ENCODE measurements at regions of chr17 and their contacts with region 1.

Region 1: DNA sequence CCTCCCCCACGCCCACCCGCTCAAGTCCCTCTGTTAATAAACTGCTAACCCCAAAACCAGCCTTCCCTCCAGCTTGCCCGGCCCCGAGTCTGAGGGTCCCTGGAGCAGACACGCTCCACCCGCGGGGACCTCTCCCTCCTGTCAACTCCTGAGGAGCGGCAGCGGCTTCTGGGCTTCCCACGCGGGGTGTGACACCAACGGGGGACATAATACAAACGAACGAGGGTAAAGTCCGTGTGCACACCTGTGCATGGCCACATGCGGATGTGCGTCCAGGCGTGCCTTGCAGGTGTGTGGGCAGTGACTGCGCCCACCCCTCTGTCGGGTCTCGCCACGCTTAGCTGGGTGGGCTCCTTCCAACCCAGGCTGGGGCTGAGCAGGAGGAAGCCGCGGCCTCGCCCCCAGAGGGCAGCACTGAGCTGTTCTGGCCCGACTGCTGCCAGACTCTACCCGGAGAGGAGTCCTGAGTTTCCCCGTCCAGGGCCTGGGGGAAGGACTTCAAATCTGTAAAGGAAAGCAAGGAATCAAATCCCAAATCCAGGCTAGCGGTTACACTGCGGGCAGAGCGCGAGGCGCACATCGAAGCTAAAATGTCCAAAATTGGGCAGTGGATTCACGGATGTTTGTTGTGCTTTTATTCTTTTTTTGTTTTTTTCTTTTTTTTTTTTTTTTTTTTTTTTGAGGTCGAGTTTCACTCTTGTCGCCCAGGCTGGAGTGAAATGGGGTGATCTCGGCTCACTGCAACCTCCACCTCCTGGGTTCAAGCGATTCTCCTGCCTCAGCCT is 24.2 kb upstream of the KRT17 start:
- DNase-seq: peak; percentile 94
- H3K4me3 ChIP-seq: peak overlapping the region; percentile 41 to 58 (median 46)
- H3K27ac ChIP-seq: peak overlapping the region; percentile 47 to 60 (median 54)
- H3K4me1 ChIP-seq: peaks cover 12 to 44% (median 38%) of the 10 kb centered on the region in 4 donors
- H3K27me3 ChIP-seq: peaks cover 0 to 3% (median 0%) of the 10 kb centered on the region in 4 donors
- CTCF ChIP-seq: peak; percentile 93 to 94 (median 93)
- EP300 ChIP-seq: no peak
- POLR2A ChIP-seq: no peak

Region 2: GRCh38 chr17:40803617-40804082 is 845.0 kb before region 1 on chr17:
- intact Hi-C with region 1: loop called (anchors 5 kb)
- DNase-seq: no peak
- H3K4me3 ChIP-seq: no peak overlapping the region
- H3K27ac ChIP-seq: no peak overlapping the region
- H3K4me1 ChIP-seq: no peaks in the 10 kb centered on the region
- H3K27me3 ChIP-seq: peaks cover 0 to 54% (median 0%) of the 10 kb centered on the region in 4 donors
- CTCF ChIP-seq: peak; percentile 84 to 85 (median 84)
- EP300 ChIP-seq: no peak
- POLR2A ChIP-seq: no peak

Region 3: DNA sequence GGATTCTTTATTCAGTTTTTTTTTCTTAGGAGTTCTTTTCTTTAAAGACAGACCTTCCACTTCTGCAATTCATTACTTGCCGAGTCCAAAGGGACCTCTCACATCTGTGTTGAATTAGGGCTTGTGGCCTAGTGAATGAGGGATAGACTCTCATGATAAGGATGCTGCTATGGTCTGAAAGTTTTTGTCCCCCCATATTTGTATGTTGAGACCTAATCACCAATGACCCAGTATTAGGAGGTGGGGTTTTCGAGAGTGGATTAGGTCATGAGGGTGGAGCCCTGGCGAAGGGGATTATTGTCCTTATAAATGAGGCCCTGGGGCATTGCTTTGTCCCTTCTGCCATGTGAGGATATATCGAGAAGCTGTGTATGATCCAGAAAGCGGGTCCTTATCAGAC is 791.1 kb before region 1 on chr17:
- intact Hi-C with region 1: loop called (anchors 5 kb)
- DNase-seq: no peak
- H3K4me3 ChIP-seq: no peak overlapping the region
- H3K27ac ChIP-seq: no peak overlapping the region
- H3K4me1 ChIP-seq: peaks cover 0 to 18% (median 3%) of the 10 kb centered on the region in 4 donors
- H3K27me3 ChIP-seq: peaks cover 0 to under 1% (median 0%) of the 10 kb centered on the region in 4 donors
- CTCF ChIP-seq: no peak
- EP300 ChIP-seq: no peak
- POLR2A ChIP-seq: no peak

Region 4: DNA sequence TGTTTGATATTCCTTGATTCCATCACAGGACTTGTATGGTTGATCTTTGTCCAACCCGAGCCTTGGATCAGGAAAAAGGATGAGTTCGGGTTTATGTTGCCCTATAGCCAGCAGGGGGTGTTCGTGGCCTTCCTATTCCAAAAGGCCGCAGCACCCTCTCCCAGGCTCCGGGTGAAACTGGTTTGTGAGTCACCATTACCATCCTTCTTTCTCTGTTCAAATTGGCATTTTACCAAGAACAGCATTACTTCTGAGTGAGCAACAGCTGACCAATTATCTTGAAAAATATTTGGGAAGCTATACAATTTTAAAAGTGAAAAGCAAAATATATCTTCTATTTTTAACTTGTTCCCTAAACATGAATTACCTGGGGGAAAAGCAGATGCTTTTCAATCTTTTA is 739.3 kb before region 1 on chr17:
- intact Hi-C with region 1: loop called (anchors 2 kb)
- DNase-seq: no peak
- H3K4me3 ChIP-seq: no peak overlapping the region
- H3K27ac ChIP-seq: peak overlapping the region; percentile 55 to 75 (median 62)
- H3K4me1 ChIP-seq: peaks cover 0 to 25% (median 21%) of the 10 kb centered on the region in 4 donors
- H3K27me3 ChIP-seq: peaks cover 0 to 12% (median 0%) of the 10 kb centered on the region in 4 donors
- CTCF ChIP-seq: peak; percentile 76 to 84 (median 81)
- EP300 ChIP-seq: no peak
- POLR2A ChIP-seq: no peak

Region 5: DNA sequence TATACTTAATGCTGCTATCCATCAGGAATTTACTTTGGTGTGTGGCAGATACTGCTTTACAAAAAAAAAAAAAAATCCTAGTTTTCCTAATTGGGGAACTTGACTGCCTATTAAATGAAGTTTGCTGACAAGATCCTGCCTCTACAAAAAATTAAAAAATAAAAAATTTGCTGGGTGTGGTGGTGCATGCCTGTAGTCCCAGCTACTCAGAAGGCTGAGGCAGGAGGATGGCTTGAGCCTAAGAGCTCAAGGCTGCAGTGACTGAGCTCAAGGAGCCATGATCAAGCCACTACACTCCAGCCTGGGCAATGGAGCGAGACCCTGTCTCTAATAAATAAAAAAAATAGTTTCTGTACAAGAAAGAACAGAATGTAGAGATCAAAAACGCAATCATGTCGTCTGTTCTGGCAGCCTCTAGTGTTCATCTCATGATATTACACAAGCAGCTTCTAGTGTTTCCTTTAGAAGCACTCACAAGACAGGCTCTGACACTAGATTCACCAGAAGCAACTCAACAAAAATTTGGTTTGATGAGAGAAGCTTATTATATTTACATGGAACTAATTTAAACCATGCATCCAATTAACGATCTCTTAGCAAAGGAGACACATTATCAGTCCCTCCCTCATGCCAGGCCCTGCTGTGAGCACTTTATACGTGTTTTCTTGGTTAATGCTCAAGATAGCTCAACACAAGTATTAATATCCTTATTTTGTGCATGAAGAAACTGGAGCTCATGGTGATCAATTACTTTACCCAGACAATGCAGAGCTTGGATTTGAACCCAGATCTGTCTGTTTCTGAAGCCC is 326.3 kb before region 1 on chr17:
- intact Hi-C with region 1: loop called (anchors 5 kb)
- DNase-seq: no peak
- H3K4me3 ChIP-seq: no peak overlapping the region
- H3K27ac ChIP-seq: no peak overlapping the region
- H3K4me1 ChIP-seq: no peaks in the 10 kb centered on the region
- H3K27me3 ChIP-seq: no peaks in the 10 kb centered on the region
- CTCF ChIP-seq: peak; percentile 64 to 82 (median 68)
- EP300 ChIP-seq: no peak
- POLR2A ChIP-seq: no peak

Region 6: GRCh38 chr17:41548844-41549595 is 99.6 kb before region 1 on chr17:
- intact Hi-C with region 1: loop called (anchors 1 kb)
- DNase-seq: peak; percentile 93
- H3K4me3 ChIP-seq: peak overlapping the region; percentile 26 to 44 (median 36)
- H3K27ac ChIP-seq: peak overlapping the region in 2 of 4 donors; percentile 17 to 46
- H3K4me1 ChIP-seq: peaks cover 17 to 26% (median 20%) of the 10 kb centered on the region in 4 donors
- H3K27me3 ChIP-seq: no peaks in the 10 kb centered on the region
- CTCF ChIP-seq: peak; percentile 69 to 81 (median 73)
- EP300 ChIP-seq: no peak
- POLR2A ChIP-seq: no peak

Region 7: DNA sequence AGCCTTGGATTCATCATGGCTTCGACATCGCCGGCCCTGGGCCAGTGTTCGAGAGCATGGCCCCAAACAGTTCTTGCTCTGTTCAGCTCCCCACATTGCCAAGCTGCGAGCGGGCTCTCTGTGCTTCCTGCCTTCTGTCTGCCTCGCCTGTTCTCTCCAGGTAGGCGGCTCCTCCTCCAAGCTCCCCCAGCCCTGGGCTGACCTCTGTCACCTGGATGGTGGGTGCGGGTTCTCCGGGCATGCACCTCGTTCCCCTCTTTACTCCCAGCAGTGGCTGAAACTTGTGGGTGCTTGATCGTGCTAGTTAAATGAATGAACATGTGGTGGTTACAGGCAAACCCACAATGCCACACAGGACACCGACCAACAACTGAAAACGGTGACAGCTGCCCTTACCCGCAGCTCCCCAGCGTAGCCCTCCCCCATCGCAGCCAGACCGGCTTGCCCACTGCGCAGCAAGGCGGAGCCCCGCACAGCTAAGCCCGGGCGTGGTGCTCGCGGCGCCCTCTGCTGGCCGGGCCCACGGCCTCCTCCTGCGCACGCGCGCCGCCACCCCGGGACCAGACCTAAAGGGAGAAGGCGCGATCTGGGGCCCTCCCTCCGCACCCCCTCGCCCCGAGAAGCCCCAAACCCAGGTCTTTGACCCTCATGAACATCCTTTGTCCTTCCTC is 17.1 kb after region 1 on chr17:
- intact Hi-C with region 1: loop called (anchors 2 kb)
- DNase-seq: peak; percentile 93
- H3K4me3 ChIP-seq: peak overlapping the region; percentile 53 to 65 (median 58)
- H3K27ac ChIP-seq: peak overlapping the region; percentile 81 to 91 (median 86)
- H3K4me1 ChIP-seq: peaks cover 21 to 37% (median 27%) of the 10 kb centered on the region in 4 donors
- H3K27me3 ChIP-seq: no peaks in the 10 kb centered on the region
- CTCF ChIP-seq: peak; percentile 94 to 99 (median 95)
- EP300 ChIP-seq: no peak
- POLR2A ChIP-seq: no peak

Region 8: DNA sequence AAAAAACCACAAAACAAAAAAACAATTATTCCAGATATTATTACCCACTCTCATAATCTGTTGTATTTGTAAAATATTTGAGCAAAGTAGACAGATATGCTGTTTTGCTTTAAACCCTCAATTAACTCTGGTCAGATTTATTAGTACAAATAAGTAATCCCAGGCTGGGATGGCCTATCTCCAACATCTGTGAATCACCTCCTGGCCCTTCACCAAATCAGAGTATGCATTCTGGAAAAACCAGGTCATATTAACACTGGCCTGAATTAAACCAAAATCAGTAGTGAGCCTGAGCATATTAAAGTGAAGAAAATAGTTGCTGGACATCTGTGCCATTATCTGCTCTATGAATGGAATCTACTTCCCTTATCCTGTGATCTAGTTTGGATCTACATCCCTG is 698.6 kb after region 1 on chr17:
- intact Hi-C with region 1: no loop called
- DNase-seq: no peak
- H3K4me3 ChIP-seq: no peak overlapping the region
- H3K27ac ChIP-seq: peak overlapping the region; percentile 49 to 74 (median 70)
- H3K4me1 ChIP-seq: peaks cover 38 to 55% (median 54%) of the 10 kb centered on the region in 4 donors
- H3K27me3 ChIP-seq: no peaks in the 10 kb centered on the region
- CTCF ChIP-seq: no peak
- EP300 ChIP-seq: no peak
- POLR2A ChIP-seq: no peak

Measured in esophagus muscularis mucosa (tissue), 4 donors.